ENCODE measurements at regions of chr15 and their contacts with region 1.

Region 1: DNA sequence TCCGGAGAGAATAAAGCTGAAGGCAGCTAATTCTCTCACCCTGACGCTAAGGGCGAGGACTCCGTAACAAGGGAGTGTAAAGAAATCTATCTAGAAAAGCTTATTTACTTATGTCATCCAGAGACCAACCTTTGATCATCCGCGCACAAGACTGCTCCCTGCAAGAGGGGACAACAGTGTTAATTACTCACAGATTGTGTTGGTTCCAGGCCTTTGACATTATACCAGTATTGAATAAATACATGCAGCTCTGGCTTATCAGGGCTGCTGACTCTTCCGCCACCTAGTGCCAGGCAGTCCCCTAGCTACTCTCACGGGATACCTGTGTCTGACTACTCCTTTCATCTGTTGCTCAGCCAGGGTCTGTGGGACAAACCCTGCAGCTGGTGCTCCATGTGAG is 211.7 kb downstream of the DTWD1 start:
- DNase-seq: no peak
- H3K4me3 ChIP-seq: no peak overlapping the region
- H3K27me3 ChIP-seq: no peaks in the 10 kb centered on the region
- CTCF ChIP-seq: peak; percentile 37

Region 2: GRCh38 chr15:49793943-49794342 is 38.6 kb before region 1 on chr15:
- CTCF ChIA-PET with region 1: no interaction called
- POLR2A ChIA-PET with region 1: no interaction called
- DNase-seq: no peak
- H3K4me3 ChIP-seq: no peak overlapping the region
- H3K27me3 ChIP-seq: no peaks in the 10 kb centered on the region
- CTCF ChIP-seq: no peak

Region 3: DNA sequence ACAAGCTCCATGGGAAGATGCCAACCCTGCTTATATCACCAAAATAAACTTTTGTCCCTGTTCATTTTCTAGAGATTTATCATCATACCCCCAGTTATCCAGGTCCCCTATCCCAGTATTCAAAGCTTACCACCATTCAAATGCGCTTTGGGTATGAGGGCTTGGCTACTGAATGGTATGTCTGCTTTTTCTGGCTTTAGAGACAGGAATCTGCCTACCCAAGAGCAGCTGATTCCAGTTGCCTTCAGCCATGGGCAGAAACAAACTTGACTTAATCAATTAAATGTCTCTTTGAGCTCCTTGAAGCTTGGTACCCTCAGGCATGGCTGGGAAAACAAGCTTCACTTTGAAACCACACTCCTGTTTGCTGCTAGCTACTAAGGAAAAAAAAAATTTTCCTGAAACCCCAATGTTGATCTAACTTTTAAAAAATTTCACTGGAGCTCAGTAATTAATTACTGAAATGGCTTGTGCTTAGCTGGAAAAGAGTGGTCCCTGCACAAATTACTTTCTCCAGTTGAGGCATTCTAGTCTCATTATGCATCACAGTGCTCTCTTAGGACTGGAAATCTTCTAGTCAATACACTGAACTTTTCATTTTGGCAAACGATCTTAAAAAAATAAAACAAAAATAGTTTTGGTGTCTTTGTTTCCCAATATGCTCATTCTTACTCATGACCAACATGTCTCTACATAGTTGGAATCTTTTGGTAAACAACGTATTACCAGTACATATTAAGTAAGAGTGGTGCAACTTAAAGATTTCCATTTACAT is 31.1 kb after region 1 on chr15:
- CTCF ChIA-PET with region 1: interaction called, 13 read pairs
- POLR2A ChIA-PET with region 1: no interaction called
- DNase-seq: peak; percentile 79
- H3K4me3 ChIP-seq: no peak overlapping the region
- H3K27me3 ChIP-seq: no peaks in the 10 kb centered on the region
- CTCF ChIP-seq: no peak

Measured in BJ (cell line).